HCT116 (cell line): ENCODE measurements at regions of chr3 and their contacts with region 1.

Region 1: DNA sequence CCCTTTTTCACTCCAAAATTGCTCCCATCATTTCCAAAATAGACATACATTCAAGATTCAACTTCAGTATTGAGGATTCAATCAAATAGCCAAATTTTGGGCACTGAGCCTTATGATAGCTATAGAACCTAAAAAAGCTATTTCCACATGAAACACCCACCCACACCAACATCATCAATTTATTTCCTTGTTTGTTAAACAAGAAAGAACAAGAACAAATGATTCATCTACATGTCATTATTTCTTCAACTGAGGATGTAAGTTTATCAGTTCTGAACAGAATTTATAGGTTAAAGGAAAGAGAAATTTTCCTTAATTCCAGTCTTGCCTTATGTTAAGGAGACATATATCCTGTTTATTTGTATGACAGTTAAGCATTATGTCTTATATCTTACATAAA is 32.2 kb downstream of the DPPA2 start:
- DNase-seq: no peak
- ATAC-seq: no peak
- H3K4me3 ChIP-seq: no peak overlapping the region
- H3K27ac ChIP-seq: no peak overlapping the region
- H3K4me1 ChIP-seq: no peaks in the 10 kb centered on the region
- H3K27me3 ChIP-seq: no peaks in the 10 kb centered on the region
- CTCF ChIP-seq: no peak
- POLR2A ChIP-seq: no peak
- RAD21 ChIP-seq: no peak

Region 2: GRCh38 chr3:109297496-109297895 is 13.4 kb after region 1 on chr3:
- CTCF ChIA-PET with region 1: no interaction called
- POLR2A ChIA-PET with region 1: no interaction called
- RAD21 ChIA-PET with region 1: no interaction called
- intact Hi-C with region 1: no loop called
- DNase-seq: no peak
- ATAC-seq: no peak
- H3K4me3 ChIP-seq: no peak overlapping the region
- H3K27ac ChIP-seq: no peak overlapping the region
- H3K4me1 ChIP-seq: no peaks in the 10 kb centered on the region
- H3K27me3 ChIP-seq: no peaks in the 10 kb centered on the region
- CTCF ChIP-seq: no peak
- POLR2A ChIP-seq: no peak
- RAD21 ChIP-seq: no peak

Region 3: DNA sequence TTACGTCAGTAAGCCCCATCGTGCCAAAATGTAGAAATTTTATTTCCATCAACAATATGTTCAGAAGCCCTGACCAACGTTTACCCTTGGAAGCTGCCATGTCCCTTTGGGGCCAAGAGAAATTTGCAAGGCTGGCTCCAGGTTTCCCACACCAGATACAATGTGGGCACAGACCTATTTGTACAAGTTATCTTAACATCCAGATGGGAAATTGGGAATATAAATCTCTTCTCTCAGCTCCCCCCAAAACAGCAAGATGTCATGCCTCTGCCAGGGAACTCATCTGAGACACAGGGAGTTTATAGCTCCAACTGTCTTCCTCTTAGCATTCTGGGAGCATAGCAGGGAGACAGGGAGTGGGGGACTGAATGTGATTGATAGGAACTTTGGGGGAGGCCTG is 41.6 kb after region 1 on chr3:
- CTCF ChIA-PET with region 1: no interaction called
- POLR2A ChIA-PET with region 1: no interaction called
- RAD21 ChIA-PET with region 1: no interaction called
- intact Hi-C with region 1: loop called (anchors 2 kb)
- DNase-seq: no peak
- ATAC-seq: no peak
- H3K4me3 ChIP-seq: no peak overlapping the region
- H3K27ac ChIP-seq: no peak overlapping the region
- H3K4me1 ChIP-seq: no peaks in the 10 kb centered on the region; a peak in 1 of 4 replicates
- H3K27me3 ChIP-seq: no peaks in the 10 kb centered on the region
- CTCF ChIP-seq: no peak
- POLR2A ChIP-seq: no peak
- RAD21 ChIP-seq: no peak